Psoas muscle (tissue), 8 donors: ENCODE measurements at regions of chr17 and their contacts with region 1.

Region 1: DNA sequence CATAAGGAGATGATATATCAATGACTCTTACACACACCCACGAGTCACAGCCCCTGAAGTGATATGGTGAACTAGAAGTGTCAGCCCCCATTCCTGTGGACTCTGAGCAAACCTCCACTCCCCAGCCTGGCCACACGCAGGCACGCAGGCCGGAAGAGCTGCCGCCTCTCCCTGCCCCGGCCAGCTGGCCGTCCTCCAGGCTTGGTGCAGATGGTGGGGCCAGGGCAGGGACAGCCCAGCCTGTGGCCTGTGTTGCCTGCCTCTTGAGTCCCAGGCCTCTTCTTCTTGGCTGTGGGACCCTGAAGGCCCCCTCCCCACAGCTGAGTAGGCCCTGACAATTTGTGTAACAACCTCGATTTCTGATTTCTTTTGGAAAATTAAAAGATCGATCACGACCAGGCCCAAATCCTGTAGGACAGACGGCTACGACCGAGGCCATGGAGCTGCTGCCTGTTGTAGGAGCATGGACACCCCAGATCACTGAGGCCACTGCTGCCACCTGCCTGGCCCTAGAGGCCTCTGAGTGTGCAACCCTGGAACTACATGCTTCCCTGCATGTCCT is 10.0 kb upstream of the MPRIP start:
- DNase-seq: peak; percentile 73 to 86
- ATAC-seq: peak; percentile 52 to 76 (median 59)
- H3K4me3 ChIP-seq: no peak overlapping the region
- H3K27ac ChIP-seq: peak overlapping the region; percentile 73
- H3K4me1 ChIP-seq: peaks cover 36% of the 10 kb centered on the region
- H3K27me3 ChIP-seq: no peaks in the 10 kb centered on the region
- CTCF ChIP-seq: no peak

Region 2: DNA sequence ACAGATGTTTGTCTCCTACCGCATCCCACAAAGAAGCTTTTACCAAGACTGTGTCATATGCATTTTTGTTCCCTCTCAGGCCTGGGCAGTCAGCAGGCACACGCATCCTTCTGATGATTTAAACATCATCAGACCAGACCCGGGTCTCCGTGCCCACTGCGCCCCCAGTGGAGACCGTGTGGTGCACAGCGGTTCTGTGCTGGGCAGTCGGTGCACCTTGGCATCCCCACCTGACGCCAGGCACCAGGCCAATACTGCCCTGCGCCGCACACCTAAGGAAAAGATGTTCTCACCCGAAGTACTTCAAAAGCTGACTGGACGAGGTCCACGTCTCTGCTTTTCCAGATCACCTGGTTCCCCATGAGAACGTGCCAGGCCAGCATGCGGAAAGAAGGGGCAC is 184.6 kb after region 1 on chr17:
- intact Hi-C with region 1: loop called in 1 of 2 experiments (anchors 10 kb)
- DNase-seq: no peak
- ATAC-seq: no peak
- H3K4me3 ChIP-seq: no peak overlapping the region
- H3K27ac ChIP-seq: no peak overlapping the region
- H3K4me1 ChIP-seq: peaks cover 5% of the 10 kb centered on the region
- H3K27me3 ChIP-seq: no peaks in the 10 kb centered on the region
- CTCF ChIP-seq: no peak